CD8-positive, alpha-beta T cell (primary cell): ENCODE measurements at regions of chr20 and their contacts with region 1.

Region 1: DNA sequence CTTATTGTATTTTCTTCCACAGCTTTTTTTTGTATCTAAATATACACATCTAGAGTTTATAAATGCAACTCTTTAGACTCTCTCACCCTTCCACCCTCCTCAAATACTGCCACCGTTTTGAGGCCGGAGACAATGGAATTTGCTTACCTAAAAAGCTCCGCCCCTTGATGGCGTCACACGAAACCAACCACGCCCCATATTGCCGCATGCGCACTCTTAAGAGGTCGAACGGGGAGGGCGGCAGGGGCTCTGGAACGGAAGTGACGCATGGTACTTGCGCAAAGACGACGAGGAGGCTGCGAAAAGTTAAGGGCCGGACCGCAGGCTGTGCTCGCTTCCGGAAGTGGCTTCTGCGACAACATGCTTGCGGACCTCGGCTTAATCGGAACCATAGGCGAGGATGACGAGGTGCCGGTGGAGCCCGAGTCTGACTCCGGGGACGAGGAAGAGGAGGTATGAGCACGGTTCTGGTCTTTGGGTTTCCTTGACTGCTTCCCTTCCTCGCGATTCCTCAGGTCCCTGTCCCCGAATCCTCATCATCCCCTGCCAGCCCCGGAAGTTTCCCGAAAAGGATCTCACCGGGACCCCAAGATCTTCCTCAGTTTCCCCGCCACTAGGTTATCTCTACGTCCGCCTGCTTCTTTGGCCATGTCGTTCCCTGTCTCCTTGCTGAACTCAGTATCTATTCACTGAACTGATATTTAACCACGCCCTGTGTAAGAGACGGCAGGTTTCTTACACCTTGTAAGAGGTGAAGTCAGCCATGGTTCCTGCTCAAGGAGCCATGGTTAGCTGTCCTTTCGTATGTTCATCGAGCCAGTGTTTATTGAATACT is at the start of gene DDX27:
- DNase-seq: peak; percentile 92 to 99 (median 96)
- ATAC-seq: peak; percentile 79
- H3K4me3 ChIP-seq: peak within 1 kb of the TSS; percentile 90 to 99
- H3K4me3 Mint-ChIP-seq: peak within 1 kb of the TSS; percentile 91
- H3K27ac ChIP-seq: peak within 1 kb of the TSS; percentile 91 to 95
- H3K27ac Mint-ChIP-seq: peak within 1 kb of the TSS; percentile 96
- H3K4me1 ChIP-seq: peaks cover 13% of the 10 kb centered on the region
- H3K4me1 Mint-ChIP-seq: peaks cover 30% of the 10 kb centered on the region
- H3K27me3 ChIP-seq: no peaks in the 10 kb centered on the region
- H3K27me3 Mint-ChIP-seq: no peaks in the 10 kb centered on the region
- CTCF ChIP-seq: no peak
- total RNA-seq, gene DDX27: 129 to 141 TPM

Region 2: DNA sequence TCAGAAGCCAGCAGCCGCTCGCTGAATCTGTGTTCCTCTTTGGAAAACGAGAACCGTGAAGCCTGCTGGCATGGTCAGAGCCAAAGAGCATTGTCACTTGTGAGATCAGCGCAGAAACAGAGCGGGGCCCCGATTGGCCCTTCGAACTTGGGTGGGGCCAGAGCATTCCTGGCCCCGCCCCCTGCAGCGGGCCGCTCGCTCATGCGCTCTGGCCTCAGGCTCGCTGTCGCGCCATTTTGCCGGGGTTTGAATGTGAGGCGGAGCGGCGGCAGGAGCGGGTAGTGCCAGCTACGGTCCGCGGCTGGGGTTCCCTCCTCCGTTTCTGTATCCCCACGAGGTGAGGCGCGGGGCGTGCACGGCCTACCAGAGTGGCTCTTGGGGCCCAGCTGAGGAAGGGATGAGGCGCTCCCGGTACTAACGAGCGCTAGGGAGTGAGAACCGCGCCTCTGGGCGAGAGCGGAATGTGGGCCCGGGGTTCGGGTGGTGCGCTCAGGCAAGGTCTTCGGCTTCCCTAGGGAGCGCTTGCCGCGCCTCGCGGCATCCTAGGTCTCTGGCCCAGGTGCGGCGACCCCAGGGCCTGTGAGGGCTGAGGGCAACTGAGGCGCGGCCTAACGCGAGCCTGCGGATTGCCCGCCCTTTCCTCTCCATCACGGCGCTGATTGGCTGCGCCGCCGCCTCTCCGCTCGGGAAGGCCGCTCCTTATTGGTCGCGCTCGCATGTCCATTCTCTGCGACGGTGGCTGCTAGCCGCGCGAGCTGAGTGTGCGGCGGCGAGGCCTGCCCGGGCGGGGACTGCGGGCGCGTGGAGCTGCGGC is 173.0 kb before region 1 on chr20 and contains the start of gene CSE1L:
- CTCF ChIA-PET with region 1: interaction called, 6 read pairs
- POLR2A ChIA-PET with region 1: interaction called, 7 read pairs
- intact Hi-C with region 1: loop called (anchors 1 kb)
- DNase-seq: peak; percentile 86 to 98 (median 95)
- ATAC-seq: peak; percentile 89
- H3K4me3 ChIP-seq: peak within 1 kb of the TSS; percentile 81 to 96
- H3K4me3 Mint-ChIP-seq: peak within 1 kb of the TSS; percentile 98
- H3K27ac ChIP-seq: peak within 1 kb of the TSS; percentile 85 to 90
- H3K27ac Mint-ChIP-seq: peak within 1 kb of the TSS; percentile 97
- H3K4me1 ChIP-seq: peaks cover 27% of the 10 kb centered on the region
- H3K4me1 Mint-ChIP-seq: peaks cover 34% of the 10 kb centered on the region
- H3K27me3 ChIP-seq: no peaks in the 10 kb centered on the region
- H3K27me3 Mint-ChIP-seq: no peaks in the 10 kb centered on the region
- CTCF ChIP-seq: no peak
- total RNA-seq, gene CSE1L: 31.8 to 33.4 TPM

Region 3: DNA sequence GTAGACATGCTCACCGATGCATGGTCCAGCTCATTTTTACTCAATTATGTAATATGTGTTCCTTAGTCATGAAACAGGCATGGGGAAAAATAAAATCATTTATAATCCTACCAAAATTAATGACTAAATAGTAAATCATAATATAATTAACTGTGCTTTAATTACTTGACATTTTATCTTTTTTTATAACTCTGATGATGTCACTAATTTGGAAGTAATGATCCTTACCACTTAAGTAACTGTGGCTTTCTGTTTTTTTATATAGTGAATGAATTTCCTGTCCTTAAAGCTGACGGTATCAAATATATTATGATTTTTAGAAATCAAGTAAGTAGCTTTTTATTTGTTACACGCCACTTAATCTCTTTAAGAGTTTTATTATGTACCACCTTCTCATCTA is 141.0 kb before region 1 on chr20:
- CTCF ChIA-PET with region 1: no interaction called
- POLR2A ChIA-PET with region 1: no interaction called
- intact Hi-C with region 1: no loop called
- DNase-seq: no peak
- ATAC-seq: no peak
- H3K4me3 ChIP-seq: no peak overlapping the region
- H3K4me3 Mint-ChIP-seq: no peak overlapping the region
- H3K27ac ChIP-seq: no peak overlapping the region
- H3K27ac Mint-ChIP-seq: no peak overlapping the region
- H3K4me1 ChIP-seq: no peaks in the 10 kb centered on the region
- H3K4me1 Mint-ChIP-seq: no peaks in the 10 kb centered on the region
- H3K27me3 ChIP-seq: no peaks in the 10 kb centered on the region
- H3K27me3 Mint-ChIP-seq: no peaks in the 10 kb centered on the region
- CTCF ChIP-seq: no peak

Region 4: DNA sequence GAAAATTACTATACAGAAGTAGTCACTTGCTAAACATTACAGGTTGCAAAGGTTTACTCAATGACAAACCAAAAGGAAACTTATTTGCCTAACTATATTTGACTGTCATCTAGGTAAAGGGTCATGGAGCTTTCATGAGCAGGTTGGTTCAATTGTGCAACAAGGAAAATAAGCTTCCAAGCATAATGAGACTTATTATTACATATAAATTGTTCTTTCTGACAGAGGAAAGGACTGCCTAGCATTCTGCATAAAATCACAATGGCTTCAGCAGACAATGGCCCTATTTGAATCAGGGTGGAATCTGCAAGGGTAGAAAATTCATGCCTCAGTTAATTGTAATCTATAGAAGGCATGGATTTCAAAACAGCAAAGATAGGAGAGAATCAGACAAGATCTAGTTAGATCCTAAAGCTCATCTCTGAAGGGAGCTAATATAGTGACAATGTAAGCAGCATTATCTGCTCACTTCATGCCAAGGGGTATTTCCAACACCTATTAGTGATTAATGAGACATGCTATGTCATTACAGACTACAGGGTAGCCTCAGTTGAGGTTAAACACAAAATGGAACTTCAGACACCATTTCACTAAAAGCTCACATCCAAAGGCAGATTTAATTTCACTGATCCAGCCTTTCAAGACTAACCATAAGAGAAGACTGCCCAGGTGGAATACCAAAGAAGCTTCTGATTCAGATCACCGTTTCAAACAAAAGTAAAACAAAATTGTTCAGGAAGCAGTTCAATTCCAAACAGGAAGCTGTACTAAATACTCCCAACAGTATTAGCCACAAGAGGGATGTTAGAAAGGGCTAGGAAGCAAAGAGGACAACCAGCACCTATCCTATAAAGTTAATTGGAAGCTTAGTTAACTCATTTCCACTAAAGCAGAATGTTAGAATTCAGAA is 39.7 kb before region 1 on chr20:
- CTCF ChIA-PET with region 1: interaction called, 29 read pairs
- POLR2A ChIA-PET with region 1: interaction called, 3 read pairs
- intact Hi-C with region 1: no loop called
- DNase-seq: no peak
- ATAC-seq: no peak
- H3K4me3 ChIP-seq: no peak overlapping the region
- H3K4me3 Mint-ChIP-seq: peak overlapping the region; percentile 4
- H3K27ac ChIP-seq: no peak overlapping the region
- H3K27ac Mint-ChIP-seq: peak overlapping the region; percentile 19
- H3K4me1 ChIP-seq: peaks cover 47% of the 10 kb centered on the region
- H3K4me1 Mint-ChIP-seq: peaks cover 61% of the 10 kb centered on the region
- H3K27me3 ChIP-seq: no peaks in the 10 kb centered on the region
- H3K27me3 Mint-ChIP-seq: no peaks in the 10 kb centered on the region
- CTCF ChIP-seq: no peak

Region 5: GRCh38 chr20:49207076-49207475 is 12.2 kb before region 1 on chr20:
- CTCF ChIA-PET with region 1: interaction called, 16 read pairs
- POLR2A ChIA-PET with region 1: no interaction called
- intact Hi-C with region 1: no loop called
- DNase-seq: no peak
- ATAC-seq: no peak
- H3K4me3 ChIP-seq: no peak overlapping the region
- H3K4me3 Mint-ChIP-seq: no peak overlapping the region
- H3K27ac ChIP-seq: no peak overlapping the region
- H3K27ac Mint-ChIP-seq: no peak overlapping the region
- H3K4me1 ChIP-seq: no peaks in the 10 kb centered on the region
- H3K4me1 Mint-ChIP-seq: no peaks in the 10 kb centered on the region
- H3K27me3 ChIP-seq: no peaks in the 10 kb centered on the region
- H3K27me3 Mint-ChIP-seq: no peaks in the 10 kb centered on the region
- CTCF ChIP-seq: no peak

Region 6: GRCh38 chr20:49356676-49357075 is 137.4 kb after region 1 on chr20:
- CTCF ChIA-PET with region 1: no interaction called
- POLR2A ChIA-PET with region 1: no interaction called
- intact Hi-C with region 1: no loop called
- DNase-seq: no peak
- ATAC-seq: no peak
- H3K4me3 ChIP-seq: no peak overlapping the region
- H3K4me3 Mint-ChIP-seq: no peak overlapping the region
- H3K27ac ChIP-seq: no peak overlapping the region
- H3K27ac Mint-ChIP-seq: no peak overlapping the region
- H3K4me1 ChIP-seq: no peaks in the 10 kb centered on the region
- H3K4me1 Mint-ChIP-seq: no peaks in the 10 kb centered on the region
- H3K27me3 ChIP-seq: no peaks in the 10 kb centered on the region
- H3K27me3 Mint-ChIP-seq: peaks cover 17% of the 10 kb centered on the region
- CTCF ChIP-seq: no peak

Region 7: DNA sequence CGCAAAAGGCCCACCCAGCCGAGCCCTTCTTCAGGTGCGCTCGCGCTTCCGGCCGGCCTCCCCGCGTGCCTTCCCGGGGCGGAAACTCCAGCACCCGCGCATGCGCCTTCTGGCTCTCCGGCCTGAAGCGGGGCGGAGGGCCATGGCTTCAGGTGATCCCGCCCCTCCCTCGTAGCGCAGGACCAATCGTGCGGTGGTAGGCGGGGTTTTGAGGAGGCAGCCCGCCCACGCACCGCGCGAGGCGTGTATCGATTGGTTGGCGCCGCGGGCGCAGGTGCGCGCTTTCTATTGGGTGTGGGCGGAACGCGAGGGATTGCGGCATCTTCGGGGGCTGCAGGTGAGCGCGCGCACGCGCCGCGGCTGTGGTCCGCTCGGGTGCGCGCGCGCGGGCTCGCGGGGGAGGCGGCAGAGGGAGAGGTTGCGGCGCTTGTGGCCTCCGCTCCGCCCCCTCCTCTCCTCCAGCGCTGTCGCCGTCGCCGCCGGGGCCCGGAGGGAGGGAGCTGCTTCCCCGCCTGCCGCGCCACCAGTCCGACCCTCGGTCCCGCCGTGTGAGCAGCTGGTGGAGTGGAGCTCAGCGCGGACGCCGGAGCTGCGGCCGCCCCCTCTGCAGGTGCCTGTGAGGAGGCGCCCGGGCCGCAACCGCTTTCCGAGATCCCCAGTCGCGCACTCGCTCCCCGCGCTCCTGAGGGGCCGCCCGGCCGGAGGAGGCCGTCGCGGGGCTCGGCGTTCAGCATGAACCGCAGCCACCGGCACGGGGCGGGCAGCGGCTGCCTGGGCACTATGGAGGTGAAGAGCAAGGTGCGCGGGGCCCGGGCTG is 1512.0 kb after region 1 on chr20 and contains the start of gene PARD6B:
- CTCF ChIA-PET with region 1: no interaction called
- POLR2A ChIA-PET with region 1: no interaction called
- intact Hi-C with region 1: loop called in 1 of 2 experiments (anchors 5 kb)
- DNase-seq: peak; percentile 98 to 100 (median 99)
- ATAC-seq: peak; percentile 96
- H3K4me3 ChIP-seq: peak within 1 kb of the TSS; percentile 72 to 81
- H3K4me3 Mint-ChIP-seq: peak within 1 kb of the TSS; percentile 91
- H3K27ac ChIP-seq: peak within 1 kb of the TSS; percentile 51 to 54
- H3K27ac Mint-ChIP-seq: peak within 1 kb of the TSS; percentile 86
- H3K4me1 ChIP-seq: peaks cover 16% of the 10 kb centered on the region
- H3K4me1 Mint-ChIP-seq: peaks cover 34% of the 10 kb centered on the region
- H3K27me3 ChIP-seq: no peaks in the 10 kb centered on the region
- H3K27me3 Mint-ChIP-seq: no peaks in the 10 kb centered on the region
- CTCF ChIP-seq: no peak
- total RNA-seq, gene PARD6B: 5.6 to 6.3 TPM